GM12878 (cell line): ENCODE measurements at regions of chr5 and their contacts with region 1.

Region 1: DNA sequence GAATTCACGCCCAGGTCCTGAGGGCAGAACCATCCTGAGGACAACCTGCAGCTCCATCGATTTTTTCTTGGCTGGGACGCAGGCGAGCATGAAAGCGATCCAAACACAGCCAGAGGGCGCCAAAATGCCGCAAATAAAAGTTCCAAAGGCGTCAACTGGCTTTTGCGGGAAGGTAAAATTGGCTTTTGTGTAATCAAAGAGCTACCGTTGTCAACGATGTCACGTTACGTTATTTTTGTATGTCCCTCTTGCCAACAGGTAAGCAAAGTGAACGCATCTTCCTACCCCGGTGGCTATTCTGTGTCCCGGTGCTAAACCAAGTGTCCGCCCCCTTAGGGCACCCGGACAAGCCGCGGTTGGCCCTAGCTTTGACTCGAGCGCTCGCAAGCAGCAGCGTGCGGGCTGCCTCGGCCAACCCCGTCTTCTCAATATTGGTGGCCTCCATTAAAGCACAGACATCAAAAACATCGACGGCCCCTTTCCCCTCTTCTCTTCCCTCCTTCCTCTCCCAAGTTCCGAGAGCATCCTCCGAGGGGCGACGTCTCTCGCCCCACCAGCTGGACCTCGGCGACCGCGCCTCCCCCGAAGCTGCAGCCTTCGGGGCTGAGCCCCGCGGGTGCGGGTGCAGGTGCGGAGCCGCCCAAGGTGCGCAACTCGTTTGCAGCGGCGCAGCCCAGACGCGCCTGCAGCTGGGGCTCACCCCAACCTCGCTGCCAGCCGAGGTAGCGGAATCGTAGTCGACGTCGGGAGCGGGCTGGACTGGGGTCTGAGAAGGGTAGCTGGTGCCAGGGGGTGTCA is 1.1 kb upstream of the BASP1 start:
- DNase-seq: peak; percentile 62
- ATAC-seq: peak; percentile 49
- H3K4me3 ChIP-seq: peak overlapping the region; percentile 52
- H3K27ac ChIP-seq: no peak overlapping the region
- H3K4me1 ChIP-seq: peaks cover 7% of the 10 kb centered on the region; the same call in 1 of the 2 replicates
- H3K27me3 ChIP-seq: no peaks in the 10 kb centered on the region
- CTCF ChIP-seq: peak; percentile 73 to 91 (median 80)
- EP300 ChIP-seq: no peak
- POLR2A ChIP-seq: no peak
- RAD21 ChIP-seq: peak; percentile 98

Region 2: DNA sequence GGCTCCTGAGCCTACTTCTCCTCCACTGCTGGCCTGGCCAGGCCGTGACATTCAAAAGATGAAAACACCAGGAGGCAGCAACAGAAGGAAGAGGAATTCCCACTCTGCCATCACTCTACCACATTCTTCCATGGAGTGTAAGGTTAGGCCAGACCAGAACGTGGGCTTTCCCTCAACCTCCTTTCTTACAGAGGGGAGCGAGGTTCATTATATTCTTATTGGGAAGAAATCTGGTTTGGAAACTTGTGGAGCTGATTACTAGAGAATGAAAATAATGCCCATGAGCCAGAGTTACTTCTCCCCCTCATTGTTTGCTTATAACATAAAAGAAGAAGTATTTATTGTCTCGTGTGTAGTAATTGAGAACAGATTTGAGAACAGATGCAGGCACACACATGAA is 135.2 kb before region 1 on chr5:
- CTCF ChIA-PET with region 1: no interaction called
- POLR2A ChIA-PET with region 1: no interaction called
- RAD21 ChIA-PET with region 1: no interaction called
- SMC1A ChIA-PET with region 1: no interaction called
- in situ Hi-C with region 1: no loop called
- intact Hi-C with region 1: no loop called
- DNase-seq: no peak
- ATAC-seq: no peak
- H3K4me3 ChIP-seq: no peak overlapping the region
- H3K27ac ChIP-seq: no peak overlapping the region
- H3K4me1 ChIP-seq: no peaks in the 10 kb centered on the region
- H3K27me3 ChIP-seq: no peaks in the 10 kb centered on the region
- CTCF ChIP-seq: no peak
- EP300 ChIP-seq: no peak
- POLR2A ChIP-seq: no peak
- RAD21 ChIP-seq: no peak

Region 3: DNA sequence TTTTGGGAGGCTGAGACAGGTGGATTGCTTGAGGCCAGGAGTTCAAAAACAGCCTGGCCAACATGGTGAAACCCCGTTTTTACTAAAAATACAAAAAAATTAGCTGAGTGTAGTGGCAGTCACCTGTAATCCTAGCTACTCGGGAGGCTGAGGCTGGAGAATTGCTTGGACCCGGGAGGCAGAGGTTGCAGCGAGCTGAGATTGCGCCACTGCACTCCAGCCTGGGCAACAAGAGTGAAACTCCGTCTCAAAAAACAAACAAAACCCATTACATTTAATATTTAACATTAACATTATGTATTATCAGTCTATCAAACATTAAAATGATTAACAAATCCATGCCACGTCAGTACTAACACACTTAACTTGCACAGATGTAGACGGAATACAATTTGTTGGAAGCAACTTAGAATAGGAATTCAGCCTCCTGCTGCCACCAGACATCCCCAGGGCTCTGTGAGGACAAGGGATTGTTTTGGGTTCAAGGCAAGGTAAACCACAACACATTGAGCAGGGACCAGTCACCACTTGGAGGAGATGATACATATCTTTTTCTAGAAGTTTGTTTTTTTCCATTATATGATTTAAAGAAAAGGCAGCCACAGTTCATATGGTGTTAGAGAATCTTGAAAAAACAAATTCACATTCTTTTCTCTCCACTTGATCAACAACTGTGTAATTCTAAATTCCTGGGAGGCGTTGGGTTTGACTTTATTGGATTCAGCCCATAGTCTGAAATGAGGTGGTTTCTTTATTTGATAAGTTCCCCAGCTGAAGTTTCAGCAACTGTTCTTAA is 103.0 kb before region 1 on chr5:
- CTCF ChIA-PET with region 1: no interaction called
- POLR2A ChIA-PET with region 1: no interaction called
- RAD21 ChIA-PET with region 1: no interaction called
- SMC1A ChIA-PET with region 1: no interaction called
- in situ Hi-C with region 1: no loop called
- intact Hi-C with region 1: no loop called
- DNase-seq: no peak
- ATAC-seq: no peak
- H3K4me3 ChIP-seq: no peak overlapping the region
- H3K27ac ChIP-seq: no peak overlapping the region
- H3K4me1 ChIP-seq: no peaks in the 10 kb centered on the region
- H3K27me3 ChIP-seq: no peaks in the 10 kb centered on the region
- CTCF ChIP-seq: no peak
- EP300 ChIP-seq: no peak
- POLR2A ChIP-seq: no peak
- RAD21 ChIP-seq: no peak

Region 4: GRCh38 chr5:17204133-17204489 is 12.3 kb before region 1 on chr5:
- CTCF ChIA-PET with region 1: interaction called, 25 read pairs
- POLR2A ChIA-PET with region 1: no interaction called
- RAD21 ChIA-PET with region 1: interaction called, 3 read pairs
- SMC1A ChIA-PET with region 1: no interaction called
- in situ Hi-C with region 1: no loop called
- intact Hi-C with region 1: no loop called
- DNase-seq: no peak
- ATAC-seq: no peak
- H3K4me3 ChIP-seq: no peak overlapping the region
- H3K27ac ChIP-seq: no peak overlapping the region
- H3K4me1 ChIP-seq: no peaks in the 10 kb centered on the region
- H3K27me3 ChIP-seq: no peaks in the 10 kb centered on the region
- CTCF ChIP-seq: no peak
- EP300 ChIP-seq: no peak
- POLR2A ChIP-seq: no peak
- RAD21 ChIP-seq: no peak

Region 5: GRCh38 chr5:17269201-17269600 is 52.8 kb after region 1 on chr5:
- CTCF ChIA-PET with region 1: interaction called, 4 read pairs
- POLR2A ChIA-PET with region 1: interaction called, 5 read pairs
- RAD21 ChIA-PET with region 1: interaction called, 5 read pairs
- SMC1A ChIA-PET with region 1: interaction called, 10 read pairs
- in situ Hi-C with region 1: no loop called
- intact Hi-C with region 1: no loop called
- DNase-seq: no peak
- ATAC-seq: peak; percentile 67
- H3K4me3 ChIP-seq: peak overlapping the region; percentile 49; the same call in 1 of the 2 replicates
- H3K27ac ChIP-seq: peak overlapping the region; percentile 45; the same call in 1 of the 2 replicates
- H3K4me1 ChIP-seq: 0 out of 2 replicates have a peak, but pooled peaks cover 2% of the 10 kb centered on the region
- H3K27me3 ChIP-seq: no peaks in the 10 kb centered on the region
- CTCF ChIP-seq: no peak
- EP300 ChIP-seq: no peak
- POLR2A ChIP-seq: no peak
- RAD21 ChIP-seq: no peak

Region 6: GRCh38 chr5:17426104-17426749 is 209.9 kb after region 1 on chr5:
- CTCF ChIA-PET with region 1: interaction called, 7 read pairs
- POLR2A ChIA-PET with region 1: no interaction called
- RAD21 ChIA-PET with region 1: interaction called, 3 read pairs
- SMC1A ChIA-PET with region 1: interaction called, 3 read pairs
- in situ Hi-C with region 1: no loop called
- intact Hi-C with region 1: loop called (anchors 5 kb)
- DNase-seq: peak; percentile 11
- ATAC-seq: peak; percentile 93
- H3K4me3 ChIP-seq: no peak overlapping the region; the same call in 1 of the 2 replicates
- H3K27ac ChIP-seq: no peak overlapping the region
- H3K4me1 ChIP-seq: peaks cover 14% of the 10 kb centered on the region
- H3K27me3 ChIP-seq: no peaks in the 10 kb centered on the region
- CTCF ChIP-seq: no peak
- EP300 ChIP-seq: no peak
- POLR2A ChIP-seq: no peak
- RAD21 ChIP-seq: no peak

Region 7: GRCh38 chr5:17910318-17910717 is 693.9 kb after region 1 on chr5:
- CTCF ChIA-PET with region 1: no interaction called
- POLR2A ChIA-PET with region 1: no interaction called
- RAD21 ChIA-PET with region 1: interaction called, 3 read pairs
- SMC1A ChIA-PET with region 1: interaction called, 3 read pairs
- in situ Hi-C with region 1: no loop called
- intact Hi-C with region 1: loop called (anchors 10 kb)
- DNase-seq: no peak
- ATAC-seq: peak; percentile 64
- H3K4me3 ChIP-seq: no peak overlapping the region
- H3K27ac ChIP-seq: no peak overlapping the region
- H3K4me1 ChIP-seq: no peaks in the 10 kb centered on the region
- H3K27me3 ChIP-seq: no peaks in the 10 kb centered on the region
- CTCF ChIP-seq: no peak
- EP300 ChIP-seq: no peak
- POLR2A ChIP-seq: no peak
- RAD21 ChIP-seq: no peak

Region 8: DNA sequence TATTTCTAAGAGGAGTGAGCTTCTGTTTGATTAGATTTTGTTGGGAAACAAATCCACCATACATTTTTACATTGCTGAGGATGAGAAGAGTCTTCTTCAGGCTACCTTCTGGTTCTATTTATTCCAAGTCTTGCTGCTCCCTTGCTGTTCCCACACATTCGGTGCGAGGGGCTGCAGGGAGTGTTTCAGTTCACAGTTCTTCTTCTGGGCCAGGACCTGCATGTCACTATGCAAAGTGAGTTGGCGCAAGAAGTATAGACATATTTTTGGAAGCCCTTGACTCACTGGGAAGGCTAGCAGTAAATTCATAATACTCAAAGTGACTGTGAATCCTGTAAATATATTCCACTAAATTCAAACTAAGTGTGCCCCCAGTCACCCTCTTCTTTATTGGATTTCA is 1075.8 kb after region 1 on chr5:
- CTCF ChIA-PET with region 1: interaction called, 11 read pairs
- POLR2A ChIA-PET with region 1: no interaction called
- RAD21 ChIA-PET with region 1: interaction called, 8 read pairs
- SMC1A ChIA-PET with region 1: interaction called, 20 read pairs
- in situ Hi-C with region 1: no loop called
- intact Hi-C with region 1: no loop called
- DNase-seq: no peak
- ATAC-seq: no peak
- H3K4me3 ChIP-seq: no peak overlapping the region
- H3K27ac ChIP-seq: no peak overlapping the region
- H3K4me1 ChIP-seq: no peaks in the 10 kb centered on the region
- H3K27me3 ChIP-seq: no peaks in the 10 kb centered on the region
- CTCF ChIP-seq: no peak
- EP300 ChIP-seq: no peak
- POLR2A ChIP-seq: no peak
- RAD21 ChIP-seq: no peak